Activated naive CD4-positive, alpha-beta T cell treated with anti-CD3 and anti-CD28 coated beads, Interleukin-2, amount 10 ng/mL, durations not matched to agents 7 days and 5 days (primary cell): ENCODE measurements at regions of chr13 and their contacts with region 1.

Region 1: DNA sequence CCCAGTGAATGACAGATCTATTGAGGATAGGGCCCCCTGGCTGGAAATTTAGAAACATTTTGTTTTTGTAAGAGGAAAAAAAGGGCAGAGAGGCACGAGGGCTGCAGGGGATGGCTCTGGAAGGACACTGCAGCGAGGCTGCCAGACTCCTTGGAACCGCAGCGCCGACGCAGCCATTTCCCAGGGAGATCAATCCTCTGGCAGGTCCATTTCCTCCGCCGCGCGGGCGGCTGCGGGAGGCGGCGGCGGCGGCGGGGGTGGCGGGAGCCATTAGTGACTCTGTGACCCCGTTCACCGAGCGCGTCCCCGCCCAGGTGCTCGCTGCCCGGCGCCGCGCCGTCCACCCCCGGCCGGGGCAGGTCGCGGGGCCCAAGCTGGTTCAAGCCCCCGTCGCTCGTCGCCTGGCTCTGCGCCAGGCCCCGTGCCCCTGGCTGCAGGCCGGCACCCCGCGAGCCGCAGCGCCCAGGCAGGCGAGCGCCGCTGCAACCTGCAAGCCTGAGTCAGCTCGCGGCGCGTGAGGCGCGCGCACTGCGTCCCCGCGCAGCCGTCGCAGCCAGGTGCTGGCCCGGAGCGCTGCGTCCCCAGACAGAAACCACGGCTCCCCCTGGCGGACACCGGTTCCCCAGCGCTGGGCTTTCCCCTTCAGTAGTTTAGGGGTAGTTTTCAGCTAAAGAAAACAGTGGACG is 192.6 kb downstream of the KATNAL1 start:
- DNase-seq: peak; percentile 95
- H3K4me3 Mint-ChIP-seq: peak overlapping the region; percentile 75
- H3K27ac Mint-ChIP-seq: peak overlapping the region; percentile 19
- H3K4me1 Mint-ChIP-seq: peaks cover 38% of the 10 kb centered on the region
- H3K27me3 Mint-ChIP-seq: peaks cover 26% of the 10 kb centered on the region

Region 2: DNA sequence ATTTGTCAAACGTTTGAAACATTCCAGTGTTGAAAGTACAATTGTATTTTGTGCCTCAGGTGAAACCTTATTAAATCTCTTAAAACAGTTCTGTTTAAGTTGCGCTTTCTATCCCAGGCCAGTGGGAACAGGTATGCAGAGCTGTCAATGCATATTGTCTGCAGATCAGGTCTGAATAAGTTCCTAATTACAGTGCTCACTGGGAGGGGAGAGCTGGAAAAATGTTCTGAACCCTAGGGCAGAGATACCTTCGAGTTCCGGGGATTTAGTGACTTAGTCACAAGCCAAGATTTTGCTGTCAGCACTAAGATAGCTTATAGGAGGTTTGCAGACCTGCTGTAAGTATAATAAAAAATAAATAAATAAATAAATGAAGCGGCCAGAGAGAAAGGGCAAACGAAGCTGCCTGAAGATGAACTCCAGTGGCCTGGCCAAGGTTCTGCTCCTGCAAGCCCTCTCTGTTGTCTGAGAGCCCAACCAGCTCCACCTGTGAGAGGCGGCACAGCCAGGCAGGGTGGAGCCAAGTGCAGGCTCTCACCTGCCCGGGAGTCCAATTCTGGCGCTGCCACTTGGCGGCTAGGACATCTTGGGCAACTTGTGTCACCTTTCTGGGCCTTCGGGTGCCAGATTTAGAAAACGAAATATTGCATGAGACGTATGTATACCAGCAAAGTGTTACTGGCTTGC is 421.3 kb before region 1 on chr13:
- CTCF ChIA-PET with region 1: no interaction called
- DNase-seq: no peak
- H3K4me3 Mint-ChIP-seq: no peak overlapping the region
- H3K27ac Mint-ChIP-seq: no peak overlapping the region
- H3K4me1 Mint-ChIP-seq: no peaks in the 10 kb centered on the region
- H3K27me3 Mint-ChIP-seq: peaks cover 16% of the 10 kb centered on the region

Region 3: DNA sequence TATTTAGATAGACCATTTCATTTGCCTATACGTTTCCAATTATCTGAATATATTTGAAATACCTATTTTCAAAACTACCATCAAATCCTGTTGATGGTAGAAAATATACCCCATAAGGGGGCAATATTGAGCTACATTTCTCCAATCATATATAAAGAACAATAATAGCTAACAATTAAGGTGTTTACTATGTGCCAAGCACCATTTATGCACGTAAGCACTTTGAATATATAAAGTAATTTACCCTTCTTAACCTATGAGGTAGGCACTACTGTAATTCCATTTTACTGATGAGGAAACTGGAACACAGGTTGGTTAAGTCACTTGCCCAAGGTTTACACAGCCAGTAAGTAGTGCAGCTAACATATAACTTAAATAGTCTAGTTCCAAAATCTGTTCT is 343.5 kb before region 1 on chr13:
- CTCF ChIA-PET with region 1: interaction called, 205 read pairs
- DNase-seq: no peak
- H3K4me3 Mint-ChIP-seq: no peak overlapping the region
- H3K27ac Mint-ChIP-seq: no peak overlapping the region
- H3K4me1 Mint-ChIP-seq: no peaks in the 10 kb centered on the region
- H3K27me3 Mint-ChIP-seq: no peaks in the 10 kb centered on the region

Region 4: DNA sequence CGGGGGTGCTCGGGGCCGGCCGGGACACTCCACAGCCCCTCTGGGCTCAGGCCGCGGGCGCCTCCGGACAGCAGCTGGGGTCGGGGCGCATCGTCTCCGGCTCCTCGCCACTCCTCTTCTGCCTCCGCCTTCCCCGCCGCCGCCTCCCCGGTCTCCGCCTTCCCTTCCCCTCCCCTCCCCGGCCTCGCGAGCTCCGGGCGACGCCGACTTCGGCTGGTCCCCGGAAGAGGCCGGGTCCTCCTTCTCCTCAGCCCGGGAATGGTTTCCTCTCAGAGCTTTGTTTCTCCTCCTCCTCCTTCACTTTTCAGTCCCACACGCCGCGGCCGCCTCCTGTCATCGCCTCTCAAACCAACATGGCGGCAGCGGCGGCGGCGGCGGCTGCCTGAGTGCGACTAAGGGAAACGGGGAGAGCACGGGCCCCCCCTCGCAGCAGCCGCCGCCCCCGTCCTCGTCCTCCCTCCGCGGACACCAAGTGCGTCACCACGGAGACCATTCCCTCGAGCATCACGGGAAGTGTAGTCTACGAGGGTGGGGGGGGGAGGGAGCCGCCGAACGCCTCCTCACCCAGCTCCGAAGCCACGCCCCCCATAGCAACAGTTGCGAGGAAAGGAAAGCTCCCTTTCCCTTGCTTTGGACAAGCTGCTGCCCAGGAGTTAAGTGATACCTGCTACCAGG is 264.4 kb before region 1 on chr13 and contains the start of gene UBL3:
- CTCF ChIA-PET with region 1: interaction called, 156 read pairs
- DNase-seq: peak; percentile 96
- H3K4me3 Mint-ChIP-seq: peak within 1 kb of the TSS; percentile 87
- H3K27ac Mint-ChIP-seq: peak within 1 kb of the TSS; percentile 99
- H3K4me1 Mint-ChIP-seq: peaks cover 48% of the 10 kb centered on the region
- H3K27me3 Mint-ChIP-seq: peaks cover 4% of the 10 kb centered on the region

Region 5: DNA sequence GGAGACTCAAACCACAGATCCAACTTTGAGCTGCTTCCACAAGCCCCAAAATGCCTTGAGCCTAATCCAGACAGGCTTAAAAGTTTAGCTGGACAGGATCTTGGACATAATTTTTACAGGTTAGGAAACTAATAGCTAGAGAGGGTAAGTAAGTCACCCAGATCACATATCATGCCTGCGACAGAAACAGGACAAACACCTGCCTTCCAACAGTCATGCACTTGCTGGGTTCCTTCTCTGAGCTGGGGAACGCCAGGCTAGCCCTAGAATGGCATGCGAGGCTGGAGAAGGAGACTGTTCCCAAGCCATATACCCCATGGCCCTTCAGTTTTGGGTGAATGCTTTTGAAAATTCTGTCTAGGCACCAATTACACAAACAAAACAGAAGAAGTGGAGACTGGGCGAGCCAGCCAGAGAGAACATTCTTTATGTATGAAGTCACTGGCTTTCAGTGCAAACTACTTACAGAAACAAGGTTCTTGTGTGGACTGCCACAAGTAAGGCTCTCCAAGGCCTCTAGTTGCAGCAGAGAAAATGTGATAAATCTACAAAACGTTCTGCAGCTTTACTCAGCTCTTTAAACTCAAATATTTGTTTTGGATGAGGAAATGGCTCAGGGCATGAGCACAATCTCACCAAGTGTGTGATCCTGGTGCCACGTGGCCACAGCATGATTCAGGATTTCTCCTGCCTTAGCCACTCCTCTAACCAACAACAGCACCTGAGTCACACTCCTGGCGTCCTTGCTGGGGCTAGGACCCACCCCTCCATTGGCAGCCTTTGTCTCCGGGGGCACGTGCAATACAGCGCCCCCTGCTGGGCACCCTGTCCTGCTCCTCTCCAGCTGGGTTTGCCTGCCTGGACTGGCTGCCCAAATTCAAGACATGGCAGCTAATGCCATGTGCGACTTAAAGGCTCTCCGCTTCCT is 190.9 kb before region 1 on chr13:
- CTCF ChIA-PET with region 1: interaction called, 24 read pairs
- DNase-seq: peak; percentile 53
- H3K4me3 Mint-ChIP-seq: no peak overlapping the region
- H3K27ac Mint-ChIP-seq: no peak overlapping the region
- H3K4me1 Mint-ChIP-seq: peaks cover 25% of the 10 kb centered on the region
- H3K27me3 Mint-ChIP-seq: peaks cover 6% of the 10 kb centered on the region

Region 6: GRCh38 chr13:29935309-29935981 is 179.3 kb before region 1 on chr13:
- CTCF ChIA-PET with region 1: interaction called, 52 read pairs
- DNase-seq: peak; percentile 91
- H3K4me3 Mint-ChIP-seq: peak overlapping the region; percentile 89
- H3K27ac Mint-ChIP-seq: peak overlapping the region; percentile 98
- H3K4me1 Mint-ChIP-seq: peaks cover 63% of the 10 kb centered on the region
- H3K27me3 Mint-ChIP-seq: no peaks in the 10 kb centered on the region

Region 7: GRCh38 chr13:30125422-30126073 is 10.8 kb after region 1 on chr13:
- CTCF ChIA-PET with region 1: interaction called, 50 read pairs
- DNase-seq: no peak
- H3K4me3 Mint-ChIP-seq: no peak overlapping the region
- H3K27ac Mint-ChIP-seq: no peak overlapping the region
- H3K4me1 Mint-ChIP-seq: peaks cover 18% of the 10 kb centered on the region
- H3K27me3 Mint-ChIP-seq: peaks cover 15% of the 10 kb centered on the region

Region 8: GRCh38 chr13:30158774-30159445 is 44.2 kb after region 1 on chr13:
- CTCF ChIA-PET with region 1: interaction called, 12 read pairs
- DNase-seq: peak; percentile 36
- H3K4me3 Mint-ChIP-seq: no peak overlapping the region
- H3K27ac Mint-ChIP-seq: no peak overlapping the region
- H3K4me1 Mint-ChIP-seq: peaks cover 43% of the 10 kb centered on the region
- H3K27me3 Mint-ChIP-seq: peaks cover 5% of the 10 kb centered on the region